ENCODE measurements at regions of chr3 and their contacts with region 1.

Region 1: GRCh38 chr3:53350652-53351051 is 3.3 kb upstream of the DCP1A start:
- DNase-seq: no peak
- ATAC-seq: no peak

Region 2: GRCh38 chr3:53412953-53413352 is 62.3 kb after region 1 on chr3:
- intact Hi-C with region 1: no loop called
- DNase-seq: no peak
- ATAC-seq: no peak

Region 3: DNA sequence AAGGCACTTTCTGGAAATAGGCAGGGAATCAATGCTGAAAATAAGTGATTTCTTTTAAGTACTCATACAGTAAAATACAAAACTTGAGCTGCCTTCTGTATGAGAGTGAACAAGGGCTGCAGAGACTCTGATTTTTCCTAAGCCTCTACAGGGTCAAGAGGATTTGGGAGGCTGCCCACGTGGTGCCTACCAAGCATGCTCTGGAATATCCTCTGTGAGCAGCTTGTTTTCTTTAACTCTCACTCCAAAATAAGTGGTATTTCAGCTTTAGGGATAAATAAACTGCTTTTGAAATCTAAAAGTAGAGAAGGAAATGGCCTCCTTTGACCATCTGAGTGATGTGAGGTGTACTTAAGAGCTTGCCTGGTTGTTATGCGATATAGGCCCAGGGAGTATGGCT is 549.1 kb after region 1 on chr3:
- intact Hi-C with region 1: loop called (anchors 10 kb)
- DNase-seq: no peak
- ATAC-seq: peak; percentile 47

Measured in Right ventricle myocardium superior (tissue), 1 donor.